ENCODE measurements at regions of chr9 and their contacts with region 1.

Region 1: DNA sequence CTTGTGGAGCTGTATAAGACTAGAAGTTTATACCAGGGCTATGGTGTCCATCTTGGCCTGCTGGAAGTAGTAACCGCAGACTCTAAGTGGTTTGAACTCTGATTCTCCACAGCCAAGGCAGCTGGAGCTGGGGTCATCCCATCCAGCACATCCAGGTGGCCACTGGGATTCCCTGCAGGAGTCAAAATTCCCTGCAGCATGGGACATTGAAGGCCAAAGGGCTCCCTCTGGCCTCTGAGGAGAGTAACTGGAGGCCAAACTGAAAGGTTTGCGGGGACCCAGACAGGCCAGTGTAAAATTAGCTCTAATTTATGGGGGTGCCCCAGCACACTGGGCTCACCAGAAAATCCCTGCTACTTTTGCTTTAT is 12.2 kb upstream of the PRXL2C start:
- DNase-seq: no peak
- H3K4me3 ChIP-seq: no peak overlapping the region
- H3K4me3 Mint-ChIP-seq: no peak overlapping the region
- H3K27ac ChIP-seq: no peak overlapping the region
- H3K27ac Mint-ChIP-seq: peak overlapping the region in 1 of 7 donors; percentile 61
- H3K4me1 ChIP-seq: no peaks in the 10 kb centered on the region
- H3K4me1 Mint-ChIP-seq: peaks cover 0 to 2% (median 0%) of the 10 kb centered on the region in 4 donors
- H3K27me3 ChIP-seq: no peaks in the 10 kb centered on the region
- H3K27me3 Mint-ChIP-seq: peaks cover 3 to 8% of the 10 kb centered on the region in 2 donors

Region 2: DNA sequence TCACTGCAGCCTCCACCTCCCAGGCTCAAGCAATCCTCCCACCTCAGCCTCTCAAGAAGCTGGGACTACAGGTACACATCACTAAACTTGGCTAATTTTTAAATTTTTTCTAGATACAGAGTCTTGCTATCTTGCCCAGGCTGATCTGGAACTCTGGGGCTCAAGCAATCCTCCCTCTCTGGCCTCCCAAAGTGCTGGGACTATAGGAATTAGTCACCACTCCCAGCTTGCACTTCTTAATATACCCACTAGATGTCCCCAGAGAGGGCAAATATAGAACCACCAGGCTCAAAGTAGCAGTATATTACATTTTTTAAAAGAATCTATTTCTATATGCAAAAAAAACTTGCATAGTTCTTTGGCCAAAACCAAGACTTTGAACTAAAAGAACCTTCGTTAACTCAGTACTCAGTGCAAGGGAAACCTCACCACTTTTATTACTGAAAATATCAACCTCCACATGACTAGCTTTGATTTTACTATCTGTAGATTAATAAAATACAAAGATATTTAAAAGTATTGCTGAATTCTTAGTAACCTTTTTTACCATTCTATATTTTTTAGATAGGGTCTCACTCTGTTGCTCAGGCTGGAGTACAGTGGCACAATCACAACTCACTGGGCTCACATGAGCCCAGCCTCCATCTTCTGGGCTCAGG is 339.5 kb before region 1 on chr9:
- CTCF ChIA-PET with region 1: interaction called, 38 read pairs
- POLR2A ChIA-PET with region 1: no interaction called
- intact Hi-C with region 1: loop called (anchors 1 kb)
- DNase-seq: peak; percentile 46 to 66 (median 54)
- H3K4me3 ChIP-seq: no peak overlapping the region
- H3K4me3 Mint-ChIP-seq: no peak overlapping the region
- H3K27ac ChIP-seq: no peak overlapping the region
- H3K27ac Mint-ChIP-seq: peak overlapping the region in 1 of 7 donors; percentile 29
- H3K4me1 ChIP-seq: no peaks in the 10 kb centered on the region
- H3K4me1 Mint-ChIP-seq: no peaks in the 10 kb centered on the region
- H3K27me3 ChIP-seq: no peaks in the 10 kb centered on the region
- H3K27me3 Mint-ChIP-seq: no peaks in the 10 kb centered on the region

Region 3: DNA sequence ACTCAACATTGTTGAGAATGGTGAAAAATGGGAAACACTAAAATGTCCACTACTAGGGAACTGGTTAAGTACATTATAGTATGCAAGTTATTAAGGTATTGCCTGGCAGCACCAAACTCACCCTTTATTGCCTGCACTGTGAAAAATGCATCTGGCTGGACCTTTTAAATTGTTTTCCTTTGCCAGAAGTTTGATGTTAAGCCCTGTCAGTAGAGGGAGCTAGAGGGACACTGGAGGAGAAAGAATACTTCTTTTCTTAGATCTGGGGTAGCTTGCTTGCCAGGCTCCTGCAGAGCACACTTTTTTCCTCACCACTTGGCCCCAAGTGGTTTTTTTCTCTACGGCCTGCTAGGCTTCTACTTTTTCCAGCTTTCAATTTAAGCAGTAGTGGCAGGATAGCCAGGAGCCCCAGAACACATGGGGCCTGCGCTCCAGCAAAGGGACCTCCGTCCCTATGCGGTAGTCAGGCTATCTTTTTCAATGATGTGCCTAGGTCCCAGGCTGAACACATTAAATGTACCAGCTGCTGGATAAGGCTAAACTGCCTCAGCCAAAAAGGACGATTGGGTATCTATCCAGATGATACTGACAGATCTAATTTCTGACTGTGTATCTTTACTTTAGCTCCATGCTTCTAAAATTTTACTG is 225.4 kb before region 1 on chr9:
- CTCF ChIA-PET with region 1: no interaction called
- POLR2A ChIA-PET with region 1: no interaction called
- intact Hi-C with region 1: loop called (anchors 5 kb)
- DNase-seq: peak in 1 of 5 donors; percentile 19
- H3K4me3 ChIP-seq: no peak overlapping the region
- H3K4me3 Mint-ChIP-seq: no peak overlapping the region
- H3K27ac ChIP-seq: no peak overlapping the region
- H3K27ac Mint-ChIP-seq: no peak overlapping the region
- H3K4me1 ChIP-seq: no peaks in the 10 kb centered on the region
- H3K4me1 Mint-ChIP-seq: no peaks in the 10 kb centered on the region
- H3K27me3 ChIP-seq: no peaks in the 10 kb centered on the region
- H3K27me3 Mint-ChIP-seq: no peaks in the 10 kb centered on the region

Measured in CD4-positive, alpha-beta memory T cell (primary cell).